ENCODE measurements at regions of chr9 and their contacts with region 1.

Region 1: GRCh38 chr9:106535439-106535838 is 327.5 kb upstream of the ZNF462 start:
- DNase-seq: peak in 1 of 5 donors; percentile 36
- ATAC-seq: peak; percentile 16 to 87 (median 60)
- H3K4me3 ChIP-seq: no peak overlapping the region
- H3K27ac ChIP-seq: no peak overlapping the region
- H3K4me1 ChIP-seq: peaks cover 0 to 22% (median 6%) of the 10 kb centered on the region in 12 donors
- H3K27me3 ChIP-seq: no peaks in the 10 kb centered on the region
- CTCF ChIP-seq: no peak
- POLR2A ChIP-seq: no peak

Region 2: DNA sequence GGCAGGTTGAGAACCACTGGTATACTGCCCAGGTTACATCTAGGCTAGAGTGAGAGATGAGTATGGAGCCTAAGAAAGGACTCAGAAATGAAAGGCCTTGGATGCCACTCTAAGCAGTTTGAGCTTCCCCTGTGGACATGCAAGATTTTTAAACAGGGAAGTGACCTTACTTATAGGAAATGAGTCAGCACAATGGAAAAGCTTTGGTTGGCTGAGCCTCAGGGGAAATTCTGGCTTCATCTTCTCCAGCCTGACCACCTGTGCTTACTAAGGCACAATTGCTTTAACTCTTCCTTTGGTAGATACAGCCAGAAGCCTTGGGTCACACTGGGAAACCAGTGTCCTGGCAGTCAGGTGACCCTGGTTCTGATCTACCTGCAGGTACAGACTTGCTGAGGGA is 52.7 kb before region 1 on chr9:
- intact Hi-C with region 1: loop called in 1 of 10 experiments (anchors 10 kb)
- DNase-seq: no peak
- ATAC-seq: peak in 3 of 4 donors; percentile 33 to 47 (median 39)
- H3K4me3 ChIP-seq: no peak overlapping the region
- H3K27ac ChIP-seq: no peak overlapping the region
- H3K4me1 ChIP-seq: peaks cover 4 to 48% (median 21%) of the 10 kb centered on the region in 12 donors
- H3K27me3 ChIP-seq: no peaks in the 10 kb centered on the region
- CTCF ChIP-seq: no peak
- POLR2A ChIP-seq: no peak

Region 3: GRCh38 chr9:106575823-106576222 is 40.4 kb after region 1 on chr9:
- intact Hi-C with region 1: no loop called
- DNase-seq: no peak
- ATAC-seq: no peak
- H3K4me3 ChIP-seq: no peak overlapping the region
- H3K27ac ChIP-seq: peak overlapping the region in 1 of 12 donors; percentile 71
- H3K4me1 ChIP-seq: no peaks in the 10 kb centered on the region
- H3K27me3 ChIP-seq: no peaks in the 10 kb centered on the region
- CTCF ChIP-seq: no peak
- POLR2A ChIP-seq: no peak

Measured in heart left ventricle (tissue), 16 donors.